ENCODE measurements at regions of chr3 and their contacts with region 1.

Region 1: DNA sequence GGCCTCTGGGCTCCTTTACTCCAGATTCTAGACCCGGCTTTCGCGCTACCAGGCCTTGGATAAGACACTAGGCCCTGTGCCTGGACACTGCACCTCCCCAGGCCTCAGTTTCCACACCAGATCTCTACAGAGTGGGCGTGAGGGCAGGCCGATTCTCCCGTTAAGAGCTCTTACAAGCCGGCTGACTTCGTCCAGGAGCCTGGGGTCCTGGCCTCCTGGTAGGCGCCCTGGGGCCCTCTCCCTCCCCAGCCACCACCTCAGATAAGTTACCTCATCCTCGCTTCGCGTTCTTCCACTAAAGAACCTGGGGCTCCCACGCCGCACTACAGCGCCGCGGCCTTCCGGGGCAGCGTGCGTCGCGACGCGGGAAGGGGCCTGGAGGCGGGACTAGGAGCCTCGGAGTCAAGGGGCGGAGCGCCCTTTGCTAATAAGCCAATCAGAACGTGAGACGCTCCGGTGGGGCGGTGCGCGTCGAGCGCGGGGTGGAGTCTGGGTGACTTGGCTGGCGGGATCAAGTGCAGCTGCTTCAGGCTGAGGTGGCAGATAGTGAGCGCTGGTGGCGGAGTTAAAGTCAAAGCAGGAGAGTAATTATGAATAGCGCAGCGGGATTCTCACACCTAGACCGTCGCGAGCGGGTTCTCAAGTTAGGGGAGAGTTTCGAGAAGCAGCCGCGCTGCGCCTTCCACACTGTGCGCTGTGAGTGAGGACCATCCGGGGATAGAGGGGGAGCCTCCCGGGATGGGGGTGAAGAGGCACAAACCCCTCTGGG is at the starts of genes EAF2 and IQCB1:
- DNase-seq: peak; percentile 97
- H3K4me3 Mint-ChIP-seq: peak within 1 kb of the TSS; percentile 95
- H3K27ac Mint-ChIP-seq: peak within 1 kb of the TSS; percentile 88
- H3K4me1 Mint-ChIP-seq: peaks cover 36% of the 10 kb centered on the region
- H3K27me3 Mint-ChIP-seq: no peaks in the 10 kb centered on the region
- total RNA-seq, gene EAF2: 8.2 to 9.3 TPM
- total RNA-seq, gene IQCB1: 36.5 to 37.8 TPM

Region 2: DNA sequence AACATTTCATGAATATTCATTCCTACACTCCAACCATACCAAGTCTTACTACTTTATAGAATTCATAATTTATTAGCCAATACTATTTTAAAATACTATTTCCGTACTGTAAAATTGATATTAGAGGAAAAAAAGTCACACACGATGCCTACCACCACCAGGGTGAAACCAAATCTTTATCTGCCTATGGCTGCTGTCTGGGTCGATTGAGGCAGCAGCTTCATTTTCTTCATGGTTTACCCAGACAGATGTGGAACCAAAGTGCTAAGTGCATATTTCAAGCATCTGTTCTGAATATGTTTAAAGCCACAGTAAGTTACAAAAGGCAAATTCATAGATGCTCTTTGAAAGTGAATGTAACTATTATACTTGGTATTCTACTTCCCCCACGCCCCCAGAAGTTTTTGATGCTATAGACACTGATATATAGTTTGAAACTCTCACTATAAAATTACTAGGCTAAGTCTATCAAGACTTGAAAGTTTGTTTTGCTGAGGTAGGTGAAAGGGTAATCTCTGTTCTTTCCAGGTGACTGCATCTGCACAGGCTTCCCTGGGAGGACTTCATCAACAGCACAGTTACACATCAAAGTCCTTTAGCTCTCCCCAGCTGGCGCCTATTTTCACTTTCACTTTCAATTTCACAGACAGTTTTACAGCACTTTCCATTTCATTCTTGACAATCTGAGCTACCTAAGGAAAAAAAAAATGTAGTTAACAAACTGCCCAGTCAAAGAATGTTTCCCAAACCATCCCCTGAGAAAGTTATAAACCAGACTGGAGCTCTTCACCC is 403.0 kb before region 1 on chr3:
- CTCF ChIA-PET with region 1: no interaction called
- intact Hi-C with region 1: loop called (anchors 2 kb)
- DNase-seq: peak; percentile 64
- H3K4me3 Mint-ChIP-seq: no peak overlapping the region
- H3K27ac Mint-ChIP-seq: no peak overlapping the region
- H3K4me1 Mint-ChIP-seq: peaks cover 18% of the 10 kb centered on the region
- H3K27me3 Mint-ChIP-seq: no peaks in the 10 kb centered on the region

Region 3: GRCh38 chr3:121749276-121750086 is 85.4 kb before region 1 on chr3 and contains the start of gene GOLGB1:
- CTCF ChIA-PET with region 1: no interaction called
- intact Hi-C with region 1: loop called (anchors 1 kb)
- DNase-seq: peak; percentile 97
- H3K4me3 Mint-ChIP-seq: no peak within 1 kb of the TSS
- H3K27ac Mint-ChIP-seq: no peak within 1 kb of the TSS
- H3K4me1 Mint-ChIP-seq: peaks cover 5% of the 10 kb centered on the region
- H3K27me3 Mint-ChIP-seq: no peaks in the 10 kb centered on the region
- total RNA-seq, gene GOLGB1: 18.2 to 19.7 TPM

Region 4: GRCh38 chr3:122258757-122259371 is 424.0 kb after region 1 on chr3:
- CTCF ChIA-PET with region 1: no interaction called
- intact Hi-C with region 1: loop called (anchors 1 kb)
- DNase-seq: peak; percentile 85
- H3K4me3 Mint-ChIP-seq: no peak overlapping the region
- H3K27ac Mint-ChIP-seq: no peak overlapping the region
- H3K4me1 Mint-ChIP-seq: peaks cover 14% of the 10 kb centered on the region
- H3K27me3 Mint-ChIP-seq: peaks cover 10% of the 10 kb centered on the region

Region 5: GRCh38 chr3:123201566-123202427 is 1366.9 kb after region 1 on chr3 and contains the start of gene SEC22A:
- CTCF ChIA-PET with region 1: no interaction called
- intact Hi-C with region 1: loop called (anchors 1 kb)
- DNase-seq: peak; percentile 98
- H3K4me3 Mint-ChIP-seq: peak within 1 kb of the TSS; percentile 95
- H3K27ac Mint-ChIP-seq: peak within 1 kb of the TSS; percentile 95
- H3K4me1 Mint-ChIP-seq: peaks cover 27% of the 10 kb centered on the region
- H3K27me3 Mint-ChIP-seq: no peaks in the 10 kb centered on the region
- total RNA-seq, gene SEC22A: 14.3 to 18.7 TPM